Gastrocnemius medialis (tissue), 4 donors: ENCODE measurements at regions of chrX and their contacts with region 1.

Region 1: DNA sequence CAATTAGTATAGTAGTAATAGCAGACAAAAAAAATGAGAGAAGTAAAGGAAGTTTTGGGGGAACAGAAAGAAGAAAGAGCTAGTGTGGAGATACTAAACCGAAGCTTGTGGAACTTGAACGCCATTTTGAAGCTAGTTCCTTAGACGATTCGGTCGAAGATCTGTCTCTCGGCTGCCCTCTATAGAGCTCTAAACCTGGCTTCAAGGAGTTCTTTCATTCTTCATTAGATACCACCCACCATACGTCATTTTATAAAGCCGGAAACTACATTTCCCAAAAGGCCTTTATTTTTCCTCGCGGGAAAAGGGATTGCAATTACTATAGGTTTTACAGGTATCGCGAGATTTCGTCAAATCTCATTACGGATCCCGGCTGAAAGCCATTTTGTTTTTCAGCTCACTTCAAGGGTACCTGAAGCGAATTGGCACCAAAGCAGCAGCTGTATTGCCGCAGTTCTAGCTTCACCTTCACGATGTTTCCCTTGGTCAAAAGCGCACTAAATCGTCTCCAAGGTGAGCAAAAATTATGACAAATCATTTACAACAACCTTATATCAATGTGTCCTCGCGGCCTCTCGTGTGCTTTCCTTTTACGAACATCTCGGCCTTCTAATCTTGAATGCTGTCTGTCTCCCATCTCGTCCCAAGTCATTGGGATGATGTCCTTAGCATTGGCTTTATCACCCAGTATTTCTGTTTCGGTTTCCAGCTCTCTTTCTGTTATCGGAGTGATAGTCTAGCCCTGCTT is at the start of gene COX7B:
- DNase-seq: peak; percentile 56 to 77
- ATAC-seq: peak; percentile 83 to 85
- H3K4me3 ChIP-seq: peak within 1 kb of the TSS; percentile 48 to 77 (median 60)
- H3K27ac ChIP-seq: peak within 1 kb of the TSS; percentile 79 to 90 (median 88)
- H3K4me1 ChIP-seq: peaks cover 2 to 21% of the 10 kb centered on the region in 2 donors
- H3K27me3 ChIP-seq: no peaks in the 10 kb centered on the region
- CTCF ChIP-seq: peak in 2 of 5 experiments; percentile 20 to 30
- POLR2A ChIP-seq: peak; percentile 78 to 80
- total RNA-seq, gene COX7B: 788 to 912 (median 821) TPM

Region 2: GRCh38 chrX:77675986-77676385 is 223.3 kb before region 1 on chrX:
- in situ Hi-C with region 1: no loop called
- intact Hi-C with region 1: loop called (anchors 10 kb)
- DNase-seq: no peak
- ATAC-seq: no peak
- H3K4me3 ChIP-seq: no peak overlapping the region
- H3K27ac ChIP-seq: no peak overlapping the region
- H3K4me1 ChIP-seq: no peaks in the 10 kb centered on the region
- H3K27me3 ChIP-seq: no peaks in the 10 kb centered on the region
- CTCF ChIP-seq: no peak
- POLR2A ChIP-seq: no peak

Region 3: DNA sequence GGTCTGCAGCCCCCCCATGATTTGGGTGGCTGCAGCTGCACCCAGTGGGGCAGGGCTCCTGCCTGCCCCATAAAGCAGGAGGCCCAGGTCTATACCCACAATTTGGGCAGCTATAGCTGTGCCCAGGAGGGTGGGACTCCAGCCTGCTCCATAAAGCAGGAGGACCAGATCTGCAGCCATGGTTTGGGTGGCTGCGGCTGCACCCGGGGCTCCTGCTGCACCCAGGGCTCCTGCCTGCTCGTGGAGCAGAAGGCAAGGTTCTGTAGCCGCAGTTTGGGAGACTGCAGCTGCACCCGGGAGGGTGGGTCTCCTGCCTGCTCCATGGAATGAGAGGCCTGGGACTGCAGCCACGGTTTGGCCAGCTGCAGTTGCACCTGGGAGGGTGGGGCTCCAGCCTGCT is 194.4 kb before region 1 on chrX:
- in situ Hi-C with region 1: no loop called
- intact Hi-C with region 1: no loop called
- DNase-seq: no peak
- ATAC-seq: no peak
- H3K4me3 ChIP-seq: no peak overlapping the region
- H3K27ac ChIP-seq: no peak overlapping the region
- H3K4me1 ChIP-seq: no peaks in the 10 kb centered on the region
- H3K27me3 ChIP-seq: no peaks in the 10 kb centered on the region
- CTCF ChIP-seq: no peak
- POLR2A ChIP-seq: no peak

Region 4: DNA sequence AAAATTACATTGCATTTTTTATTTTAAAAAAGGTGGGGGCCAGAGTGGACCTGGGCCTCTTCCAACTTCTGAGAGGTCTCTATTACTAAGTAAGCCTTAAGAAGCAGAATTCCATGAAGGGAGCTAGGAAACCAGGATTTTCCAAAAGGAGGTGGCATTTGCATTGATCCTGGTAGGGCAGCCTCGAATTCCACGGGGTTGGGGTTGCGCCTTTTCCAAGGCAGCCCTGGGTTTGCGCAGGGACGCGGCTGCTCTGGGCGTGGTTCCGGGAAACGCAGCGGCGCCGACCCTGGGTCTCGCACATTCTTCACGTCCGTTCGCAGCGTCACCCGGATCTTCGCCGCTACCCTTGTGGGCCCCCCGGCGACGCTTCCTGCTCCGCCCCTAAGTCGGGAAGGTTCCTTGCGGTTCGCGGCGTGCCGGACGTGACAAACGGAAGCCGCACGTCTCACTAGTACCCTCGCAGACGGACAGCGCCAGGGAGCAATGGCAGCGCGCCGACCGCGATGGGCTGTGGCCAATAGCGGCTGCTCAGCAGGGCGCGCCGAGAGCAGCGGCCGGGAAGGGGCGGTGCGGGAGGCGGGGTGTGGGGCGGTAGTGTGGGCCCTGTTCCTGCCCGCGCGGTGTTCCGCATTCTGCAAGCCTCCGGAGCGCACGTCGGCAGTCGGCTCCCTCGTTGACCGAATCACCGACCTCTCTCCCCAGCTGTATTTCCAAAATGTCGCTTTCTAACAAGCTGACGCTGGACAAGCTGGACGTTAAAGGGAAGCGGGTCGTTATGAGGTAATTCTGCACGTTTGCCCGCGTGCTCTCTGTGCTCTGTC is 204.6 kb after region 1 on chrX and contains the start of gene PGK1:
- in situ Hi-C with region 1: loop called in 3 of 4 experiments (anchors 10 to 25 kb)
- intact Hi-C with region 1: loop called (anchors 1 kb)
- DNase-seq: peak; percentile 90 to 95
- ATAC-seq: peak; percentile 81 to 90
- H3K4me3 ChIP-seq: peak within 1 kb of the TSS; percentile 81 to 94 (median 88)
- H3K27ac ChIP-seq: peak within 1 kb of the TSS; percentile 91 to 98 (median 98)
- H3K4me1 ChIP-seq: peaks cover 36 to 37% of the 10 kb centered on the region in 2 donors
- H3K27me3 ChIP-seq: no peaks in the 10 kb centered on the region
- CTCF ChIP-seq: no peak
- POLR2A ChIP-seq: peak; percentile 85 to 88
- total RNA-seq, gene PGK1: 220 to 392 (median 310) TPM